ENCODE measurements at regions of chr7 and their contacts with region 1.

Region 1: GRCh38 chr7:150520145-150520544 is 5.5 kb downstream of the GIMAP7 start:
- DNase-seq: peak in 1 of 5 donors; percentile 34
- H3K4me3 ChIP-seq: peak overlapping the region; percentile 61 to 74
- H3K4me3 Mint-ChIP-seq: peak overlapping the region; percentile 97 to 100 (median 99)
- H3K27ac ChIP-seq: peak overlapping the region; percentile 62
- H3K27ac Mint-ChIP-seq: peak overlapping the region; percentile 81 to 97 (median 92)
- H3K4me1 ChIP-seq: peaks cover 18% of the 10 kb centered on the region
- H3K4me1 Mint-ChIP-seq: peaks cover 21 to 50% (median 33%) of the 10 kb centered on the region in 4 donors
- H3K27me3 ChIP-seq: no peaks in the 10 kb centered on the region
- H3K27me3 Mint-ChIP-seq: no peaks in the 10 kb centered on the region

Region 2: DNA sequence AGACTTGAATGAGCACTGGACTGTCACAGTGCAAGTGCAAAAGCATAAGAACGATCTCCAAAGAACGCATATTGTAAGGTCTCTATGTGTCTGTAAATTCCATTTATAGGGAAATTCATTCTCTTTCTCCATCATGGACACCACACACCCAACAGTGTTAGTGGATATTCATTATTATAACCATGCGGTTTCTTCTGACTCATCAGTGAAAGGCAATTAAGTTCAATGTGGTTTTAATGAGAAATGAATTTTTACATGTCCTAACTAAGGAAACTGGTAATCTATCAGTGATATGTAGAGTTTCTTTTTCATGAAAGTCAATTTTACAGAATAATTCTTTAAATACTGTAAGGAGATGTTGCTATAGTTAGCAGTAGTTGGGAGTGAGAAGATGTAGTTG is 43.9 kb before region 1 on chr7:
- CTCF ChIA-PET with region 1: interaction called, 5 read pairs
- POLR2A ChIA-PET with region 1: interaction called, 673 read pairs
- intact Hi-C with region 1: loop called (anchors 1 kb)
- DNase-seq: no peak
- H3K4me3 ChIP-seq: no peak overlapping the region
- H3K4me3 Mint-ChIP-seq: peak overlapping the region; percentile 17 to 83 (median 71)
- H3K27ac ChIP-seq: peak overlapping the region; percentile 71
- H3K27ac Mint-ChIP-seq: peak overlapping the region; percentile 96 to 100 (median 99)
- H3K4me1 ChIP-seq: peaks cover 86% of the 10 kb centered on the region
- H3K4me1 Mint-ChIP-seq: peaks cover 70 to 94% (median 85%) of the 10 kb centered on the region in 4 donors
- H3K27me3 ChIP-seq: no peaks in the 10 kb centered on the region
- H3K27me3 Mint-ChIP-seq: no peaks in the 10 kb centered on the region

Region 3: DNA sequence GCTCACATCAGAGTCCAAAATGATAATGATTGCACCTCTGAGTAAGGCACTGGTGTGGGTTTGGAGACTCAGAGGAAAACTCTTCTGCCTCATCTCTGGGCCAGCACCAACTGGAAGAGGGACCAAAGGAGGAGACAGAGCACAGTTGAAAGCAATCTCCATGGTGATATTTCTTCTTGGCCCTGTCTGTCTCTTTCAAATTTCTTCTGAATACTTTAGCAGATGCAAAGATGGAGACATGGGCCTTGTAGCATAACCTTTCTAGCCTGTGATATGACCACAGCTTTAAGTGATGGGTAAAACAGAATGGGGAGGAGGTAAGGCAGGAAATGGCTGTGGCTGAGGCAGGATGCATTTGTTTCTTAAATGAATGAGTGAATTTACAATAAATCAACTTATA is 17.6 kb before region 1 on chr7:
- CTCF ChIA-PET with region 1: interaction called, 12 read pairs
- POLR2A ChIA-PET with region 1: interaction called, 158 read pairs
- intact Hi-C with region 1: no loop called
- DNase-seq: peak; percentile 56 to 75 (median 67)
- H3K4me3 ChIP-seq: no peak overlapping the region
- H3K4me3 Mint-ChIP-seq: peak overlapping the region; percentile 22 to 86 (median 73)
- H3K27ac ChIP-seq: peak overlapping the region; percentile 51
- H3K27ac Mint-ChIP-seq: peak overlapping the region; percentile 84 to 99 (median 92)
- H3K4me1 ChIP-seq: peaks cover 53% of the 10 kb centered on the region
- H3K4me1 Mint-ChIP-seq: peaks cover 66 to 94% (median 81%) of the 10 kb centered on the region in 4 donors
- H3K27me3 ChIP-seq: no peaks in the 10 kb centered on the region
- H3K27me3 Mint-ChIP-seq: no peaks in the 10 kb centered on the region

Region 4: GRCh38 chr7:150507947-150508602 is 12.1 kb before region 1 on chr7:
- CTCF ChIA-PET with region 1: interaction called, 12 read pairs
- POLR2A ChIA-PET with region 1: interaction called, 158 read pairs
- intact Hi-C with region 1: no loop called
- DNase-seq: no peak
- H3K4me3 ChIP-seq: peak overlapping the region; percentile 4 to 28
- H3K4me3 Mint-ChIP-seq: peak overlapping the region; percentile 78 to 88 (median 85)
- H3K27ac ChIP-seq: peak overlapping the region; percentile 61
- H3K27ac Mint-ChIP-seq: peak overlapping the region; percentile 89 to 96 (median 93)
- H3K4me1 ChIP-seq: peaks cover 95% of the 10 kb centered on the region
- H3K4me1 Mint-ChIP-seq: peaks cover 78 to 97% (median 87%) of the 10 kb centered on the region in 4 donors
- H3K27me3 ChIP-seq: no peaks in the 10 kb centered on the region
- H3K27me3 Mint-ChIP-seq: no peaks in the 10 kb centered on the region

Region 5: GRCh38 chr7:150556521-150557138 is 36.5 kb after region 1 on chr7:
- CTCF ChIA-PET with region 1: interaction called, 3 read pairs
- POLR2A ChIA-PET with region 1: interaction called, 777 read pairs
- intact Hi-C with region 1: loop called (anchors 2 kb)
- DNase-seq: peak in 4 of 5 donors; percentile 53 to 76 (median 72)
- H3K4me3 ChIP-seq: peak overlapping the region in 1 of 2 donors; percentile 4
- H3K4me3 Mint-ChIP-seq: peak overlapping the region; percentile 34 to 87 (median 78)
- H3K27ac ChIP-seq: peak overlapping the region; percentile 40
- H3K27ac Mint-ChIP-seq: peak overlapping the region; percentile 79 to 96 (median 94)
- H3K4me1 ChIP-seq: peaks cover 64% of the 10 kb centered on the region
- H3K4me1 Mint-ChIP-seq: peaks cover 53 to 87% (median 72%) of the 10 kb centered on the region in 4 donors
- H3K27me3 ChIP-seq: no peaks in the 10 kb centered on the region
- H3K27me3 Mint-ChIP-seq: no peaks in the 10 kb centered on the region

Region 6: GRCh38 chr7:150737265-150738055 is 217.3 kb after region 1 on chr7 and contains the start of gene GIMAP5:
- CTCF ChIA-PET with region 1: interaction called, 10 read pairs
- POLR2A ChIA-PET with region 1: interaction called, 187 read pairs
- intact Hi-C with region 1: loop called (anchors 5 kb)
- DNase-seq: peak in 4 of 5 donors; percentile 58 to 74 (median 61)
- H3K4me3 ChIP-seq: peak within 1 kb of the TSS; percentile 81 to 82
- H3K4me3 Mint-ChIP-seq: peak within 1 kb of the TSS; percentile 92 to 100 (median 98)
- H3K27ac ChIP-seq: peak within 1 kb of the TSS; percentile 83
- H3K27ac Mint-ChIP-seq: peak within 1 kb of the TSS; percentile 86 to 98 (median 96)
- H3K4me1 ChIP-seq: peaks cover 64% of the 10 kb centered on the region
- H3K4me1 Mint-ChIP-seq: peaks cover 55 to 94% (median 64%) of the 10 kb centered on the region in 4 donors
- H3K27me3 ChIP-seq: no peaks in the 10 kb centered on the region
- H3K27me3 Mint-ChIP-seq: no peaks in the 10 kb centered on the region
- total RNA-seq, gene GIMAP5: 296 to 297 TPM